Colonic mucosa (tissue), 4 donors: ENCODE measurements at regions of chrX and their contacts with region 1.

Region 1: GRCh38 chrX:24245201-24245600 is 68.7 kb downstream of the SUPT20HL2 start:
- DNase-seq: no peak
- H3K4me3 ChIP-seq: no peak overlapping the region
- H3K27ac ChIP-seq: no peak overlapping the region
- H3K4me1 ChIP-seq: no peaks in the 10 kb centered on the region
- H3K27me3 ChIP-seq: no peaks in the 10 kb centered on the region
- CTCF ChIP-seq: no peak

Region 2: GRCh38 chrX:24081661-24082264 is 163.4 kb before region 1 on chrX:
- intact Hi-C with region 1: loop called (anchors 2 kb)
- DNase-seq: peak; percentile 58
- H3K4me3 ChIP-seq: no peak overlapping the region
- H3K27ac ChIP-seq: no peak overlapping the region
- H3K4me1 ChIP-seq: no peaks in the 10 kb centered on the region
- H3K27me3 ChIP-seq: no peaks in the 10 kb centered on the region
- CTCF ChIP-seq: peak; percentile 28

Region 3: GRCh38 chrX:24110069-24110468 is 135.1 kb before region 1 on chrX:
- intact Hi-C with region 1: no loop called
- DNase-seq: no peak
- H3K4me3 ChIP-seq: no peak overlapping the region
- H3K27ac ChIP-seq: no peak overlapping the region
- H3K4me1 ChIP-seq: no peaks in the 10 kb centered on the region
- H3K27me3 ChIP-seq: no peaks in the 10 kb centered on the region
- CTCF ChIP-seq: no peak